ENCODE measurements at regions of chr12 and their contacts with region 1.

Region 1: GRCh38 chr12:74890237-74890599 is 319.4 kb downstream of the KCNC2 start:
- DNase-seq: peak; percentile 50 to 59
- H3K4me3 ChIP-seq: no peak overlapping the region
- H3K4me3 Mint-ChIP-seq: no peak overlapping the region
- H3K27ac Mint-ChIP-seq: no peak overlapping the region
- H3K4me1 ChIP-seq: peaks cover 24% of the 10 kb centered on the region
- H3K4me1 Mint-ChIP-seq: peaks cover 6% of the 10 kb centered on the region
- H3K27me3 ChIP-seq: no peaks in the 10 kb centered on the region
- H3K27me3 Mint-ChIP-seq: no peaks in the 10 kb centered on the region
- CTCF ChIP-seq: no peak

Region 2: DNA sequence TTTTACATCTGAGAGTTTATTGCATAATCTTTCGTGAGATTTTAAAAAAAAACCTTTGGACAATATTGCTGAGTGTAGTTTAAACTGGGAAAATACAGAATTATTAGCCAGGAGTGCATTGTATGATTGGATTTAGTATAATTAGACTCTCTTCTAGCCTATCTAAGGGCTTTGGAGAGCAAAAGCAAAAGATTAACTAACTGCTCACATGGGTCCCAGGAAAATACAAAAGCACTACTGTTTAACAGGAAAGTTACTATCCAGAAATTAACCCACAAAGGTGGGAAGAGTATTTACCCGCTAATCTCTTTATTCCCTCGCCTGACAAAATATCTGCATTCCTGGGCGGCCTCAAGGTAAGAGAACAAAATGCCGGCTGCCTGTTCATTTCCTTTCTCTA is 43.0 kb before region 1 on chr12:
- CTCF ChIA-PET with region 1: no interaction called
- POLR2A ChIA-PET with region 1: no interaction called
- intact Hi-C with region 1: loop called (anchors 1 kb)
- DNase-seq: no peak
- H3K4me3 ChIP-seq: no peak overlapping the region
- H3K4me3 Mint-ChIP-seq: no peak overlapping the region
- H3K27ac Mint-ChIP-seq: no peak overlapping the region
- H3K4me1 ChIP-seq: no peaks in the 10 kb centered on the region
- H3K4me1 Mint-ChIP-seq: no peaks in the 10 kb centered on the region
- H3K27me3 ChIP-seq: no peaks in the 10 kb centered on the region
- H3K27me3 Mint-ChIP-seq: no peaks in the 10 kb centered on the region
- CTCF ChIP-seq: no peak